Pancreas (tissue), 10 donors: ENCODE measurements at regions of chr2 and their contacts with region 1.

Region 1: DNA sequence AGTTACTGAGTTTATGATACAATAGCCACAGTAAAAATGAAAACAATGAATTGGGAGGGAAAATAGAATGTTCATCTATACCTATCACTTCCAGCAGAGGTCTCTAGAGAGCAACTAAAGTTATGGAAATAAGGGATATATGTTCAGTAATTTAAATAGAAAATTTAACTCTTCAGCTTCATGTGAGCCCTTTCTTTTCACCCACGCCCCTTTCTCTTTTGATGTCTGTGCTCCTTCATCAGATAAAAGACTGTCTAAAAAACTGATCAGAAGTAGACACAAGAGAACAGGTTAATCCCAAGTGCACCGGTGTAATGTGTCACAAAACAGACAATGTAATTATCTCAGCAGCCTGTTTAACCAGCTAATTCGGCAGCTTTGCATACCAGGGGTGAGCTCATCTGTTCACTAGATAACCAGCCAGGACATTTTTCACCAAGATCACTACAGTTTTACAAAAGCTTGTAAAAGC is 238.5 kb upstream of the ERBB4 start:
- DNase-seq: no peak
- ATAC-seq: peak in 3 of 4 donors; percentile 56 to 79 (median 76)
- H3K4me3 ChIP-seq: no peak overlapping the region
- H3K27ac ChIP-seq: no peak overlapping the region
- H3K4me1 ChIP-seq: no peaks in the 10 kb centered on the region
- H3K27me3 ChIP-seq: no peaks in the 10 kb centered on the region
- CTCF ChIP-seq: peak in 3 of 4 donors; percentile 44 to 58 (median 45)

Region 2: DNA sequence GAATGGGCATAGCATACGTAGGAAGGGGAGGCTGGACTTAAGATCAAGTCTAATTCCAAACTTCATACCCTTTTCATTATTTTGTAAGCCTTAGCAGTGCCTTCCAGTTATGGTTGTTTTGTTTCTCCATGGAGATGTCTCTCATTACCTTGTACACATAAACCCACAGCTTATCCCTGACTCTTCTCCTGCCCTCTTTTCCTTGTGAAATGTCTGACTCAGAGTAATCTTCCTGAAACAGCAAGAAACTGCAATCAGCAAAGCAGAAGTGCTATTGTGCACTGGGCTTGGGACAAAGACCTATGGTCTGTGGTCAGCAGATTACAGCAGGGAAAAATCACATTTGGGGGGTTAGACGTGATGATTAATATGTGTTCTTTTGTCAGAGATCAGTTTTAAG is 197.6 kb after region 1 on chr2:
- intact Hi-C with region 1: no loop called
- DNase-seq: no peak
- ATAC-seq: peak in 2 of 4 donors; percentile 26 to 62
- H3K4me3 ChIP-seq: no peak overlapping the region
- H3K27ac ChIP-seq: no peak overlapping the region
- H3K4me1 ChIP-seq: no peaks in the 10 kb centered on the region
- H3K27me3 ChIP-seq: no peaks in the 10 kb centered on the region
- CTCF ChIP-seq: no peak

Region 3: GRCh38 chr2:213151437-213152064 is 374.5 kb after region 1 on chr2 and contains the start of gene IKZF2:
- intact Hi-C with region 1: loop called in 2 of 3 experiments (anchors 5 to 10 kb)
- DNase-seq: peak; percentile 83 to 91 (median 84)
- ATAC-seq: peak; percentile 82 to 92 (median 90)
- H3K4me3 ChIP-seq: peak within 1 kb of the TSS; percentile 57 to 83 (median 80)
- H3K27ac ChIP-seq: peak within 1 kb of the TSS; percentile 92 to 98 (median 95)
- H3K4me1 ChIP-seq: peaks cover 0 to 18% (median 4%) of the 10 kb centered on the region in 3 donors
- H3K27me3 ChIP-seq: no peaks in the 10 kb centered on the region
- CTCF ChIP-seq: no peak
- total RNA-seq, gene IKZF2: 3.0 to 8.6 (median 3.3) TPM